Activated CD8-positive, alpha-beta T cell treated with anti-CD3 and anti-CD28 coated beads for 36 hours (primary cell): ENCODE measurements at regions of chr4 and their contacts with region 1.

Region 1: DNA sequence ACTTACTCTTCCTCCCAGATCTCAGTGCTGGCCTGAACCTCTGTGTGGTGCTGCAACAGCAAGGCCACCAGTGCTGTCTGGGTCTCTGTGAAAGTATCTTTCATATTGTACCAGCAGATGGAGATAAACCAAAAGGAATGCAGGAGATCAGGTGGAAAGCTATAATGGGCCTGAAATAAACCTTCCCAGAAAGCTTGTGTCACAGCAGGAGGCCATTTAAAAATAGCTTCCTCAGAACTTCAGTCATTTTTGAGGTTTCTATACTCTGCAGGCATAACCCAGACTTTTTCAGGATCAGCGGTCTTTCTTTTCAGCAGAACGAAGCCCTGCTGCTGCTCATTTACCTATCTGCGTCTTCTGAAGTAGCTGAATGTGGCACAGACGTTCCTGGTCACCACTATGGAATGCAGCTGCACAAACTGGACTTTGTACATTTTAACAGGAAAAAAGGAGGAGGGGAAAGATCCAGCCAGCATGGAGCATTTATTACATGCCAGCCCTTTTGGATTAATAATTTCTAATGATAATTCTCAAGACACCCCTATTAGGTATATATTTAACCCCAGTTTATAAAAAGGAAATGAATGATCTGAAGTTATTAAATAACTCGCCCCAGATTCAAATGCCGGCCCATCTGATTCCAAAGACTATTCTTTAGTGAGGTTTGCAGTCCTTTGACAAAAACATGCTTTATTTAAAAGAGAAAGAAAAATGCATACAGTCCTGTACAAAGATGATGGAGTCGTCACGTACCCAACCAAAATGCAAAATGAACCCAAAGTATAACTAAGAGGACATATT is 119.7 kb downstream of the NFKB1 start:
- DNase-seq: peak; percentile 31
- ATAC-seq: peak; percentile 23
- H3K4me3 Mint-ChIP-seq: no peak overlapping the region
- H3K27ac Mint-ChIP-seq: no peak overlapping the region
- H3K4me1 Mint-ChIP-seq: peaks cover 46% of the 10 kb centered on the region
- H3K27me3 Mint-ChIP-seq: no peaks in the 10 kb centered on the region
- CTCF ChIP-seq: no peak

Region 2: GRCh38 chr4:102344954-102345794 is 275.7 kb before region 1 on chr4 and contains the start of gene SLC39A8:
- CTCF ChIA-PET with region 1: interaction called, 4 read pairs
- POLR2A ChIA-PET with region 1: no interaction called
- intact Hi-C with region 1: loop called (anchors 10 kb)
- DNase-seq: peak; percentile 96
- ATAC-seq: peak; percentile 83
- H3K4me3 Mint-ChIP-seq: peak within 1 kb of the TSS; percentile 81
- H3K27ac Mint-ChIP-seq: peak within 1 kb of the TSS; percentile 97
- H3K4me1 Mint-ChIP-seq: peaks cover 42% of the 10 kb centered on the region
- H3K27me3 Mint-ChIP-seq: no peaks in the 10 kb centered on the region
- CTCF ChIP-seq: peak; percentile 97
- total RNA-seq, gene SLC39A8: 60.2 to 61.6 TPM

Region 3: GRCh38 chr4:102430461-102430910 is 190.4 kb before region 1 on chr4:
- CTCF ChIA-PET with region 1: interaction called, 3 read pairs
- POLR2A ChIA-PET with region 1: no interaction called
- intact Hi-C with region 1: loop called (anchors 5 kb)
- DNase-seq: no peak
- ATAC-seq: no peak
- H3K4me3 Mint-ChIP-seq: peak overlapping the region; percentile 84
- H3K27ac Mint-ChIP-seq: peak overlapping the region; percentile 88
- H3K4me1 Mint-ChIP-seq: peaks cover 11% of the 10 kb centered on the region
- H3K27me3 Mint-ChIP-seq: no peaks in the 10 kb centered on the region
- CTCF ChIP-seq: no peak

Region 4: DNA sequence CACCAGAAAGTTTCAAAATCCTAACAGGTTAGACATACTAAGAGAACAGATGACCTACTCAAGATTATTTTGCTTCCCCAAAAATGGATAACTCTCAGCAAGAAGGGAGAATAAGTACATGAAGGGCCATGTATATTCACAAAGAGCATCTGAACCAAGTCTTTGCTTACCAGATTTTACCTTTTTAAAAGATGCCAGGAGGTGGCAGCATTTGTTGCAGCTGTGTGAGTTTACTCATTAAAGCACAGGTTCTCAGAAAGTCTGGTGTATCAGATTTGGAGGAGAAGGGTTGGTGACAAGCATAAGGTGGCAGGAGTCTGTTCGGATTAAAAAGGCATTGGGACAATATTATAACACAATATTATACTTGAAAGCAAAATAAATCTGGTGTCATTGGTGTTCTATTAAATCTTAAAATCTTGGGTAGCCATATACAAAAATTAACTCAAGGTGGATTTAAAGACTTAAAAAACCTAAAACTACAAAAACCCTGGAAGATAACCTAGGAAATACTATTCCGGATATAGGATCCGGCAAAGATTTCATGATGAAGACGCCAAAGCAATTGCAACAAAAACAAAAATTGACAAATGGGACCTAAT is 171.0 kb before region 1 on chr4:
- CTCF ChIA-PET with region 1: interaction called, 24 read pairs
- POLR2A ChIA-PET with region 1: interaction called, 8 read pairs
- intact Hi-C with region 1: loop called (anchors 1 kb)
- DNase-seq: peak; percentile 73
- ATAC-seq: peak; percentile 77
- H3K4me3 Mint-ChIP-seq: no peak overlapping the region
- H3K27ac Mint-ChIP-seq: no peak overlapping the region
- H3K4me1 Mint-ChIP-seq: peaks cover 48% of the 10 kb centered on the region
- H3K27me3 Mint-ChIP-seq: no peaks in the 10 kb centered on the region
- CTCF ChIP-seq: peak; percentile 88

Region 5: DNA sequence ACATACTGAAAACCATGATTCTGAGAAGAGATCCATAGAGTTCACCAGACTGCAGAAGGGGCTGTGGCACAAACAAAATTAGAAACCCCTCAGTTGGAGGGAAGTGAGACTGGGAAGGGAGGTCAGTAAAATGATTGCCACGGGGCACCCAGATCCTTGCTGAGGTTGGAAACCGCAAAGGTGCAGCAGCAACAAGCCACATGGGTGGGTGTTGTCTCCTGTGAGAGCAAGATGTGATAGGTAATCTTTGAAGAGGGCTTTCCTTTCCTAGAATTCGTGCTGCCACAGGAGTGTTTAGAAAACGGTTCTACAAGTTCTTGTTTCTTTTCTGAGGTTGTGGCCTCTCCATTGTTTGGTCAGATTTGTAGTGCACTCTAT is 34.3 kb before region 1 on chr4:
- CTCF ChIA-PET with region 1: no interaction called
- POLR2A ChIA-PET with region 1: no interaction called
- intact Hi-C with region 1: loop called (anchors 5 kb)
- DNase-seq: peak; percentile 83
- ATAC-seq: peak; percentile 62
- H3K4me3 Mint-ChIP-seq: no peak overlapping the region
- H3K27ac Mint-ChIP-seq: peak overlapping the region; percentile 95
- H3K4me1 Mint-ChIP-seq: peaks cover 87% of the 10 kb centered on the region
- H3K27me3 Mint-ChIP-seq: no peaks in the 10 kb centered on the region
- CTCF ChIP-seq: no peak

Region 6: DNA sequence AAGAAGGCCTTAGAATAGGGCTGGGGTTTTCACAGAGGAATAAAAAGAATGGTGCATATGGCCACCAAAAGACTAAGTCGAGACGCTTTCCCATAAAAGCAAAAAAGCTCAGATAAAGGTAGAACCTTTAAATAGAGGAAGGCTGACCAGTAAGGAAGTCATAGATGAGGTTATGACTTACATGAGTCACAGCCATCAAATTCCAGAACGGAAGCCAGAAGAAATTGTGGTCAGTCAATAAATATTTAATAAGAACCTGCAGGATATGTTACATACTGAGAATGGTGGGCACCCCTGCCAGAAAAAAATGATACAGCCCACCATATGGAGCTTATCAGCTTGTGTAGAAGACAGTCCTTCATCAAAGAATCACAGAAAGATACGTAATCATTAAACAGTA is 19.8 kb after region 1 on chr4:
- CTCF ChIA-PET with region 1: no interaction called
- POLR2A ChIA-PET with region 1: no interaction called
- intact Hi-C with region 1: no loop called
- DNase-seq: no peak
- ATAC-seq: no peak
- H3K4me3 Mint-ChIP-seq: no peak overlapping the region
- H3K27ac Mint-ChIP-seq: no peak overlapping the region
- H3K4me1 Mint-ChIP-seq: peaks cover 11% of the 10 kb centered on the region
- H3K27me3 Mint-ChIP-seq: no peaks in the 10 kb centered on the region
- CTCF ChIP-seq: no peak

Region 7: DNA sequence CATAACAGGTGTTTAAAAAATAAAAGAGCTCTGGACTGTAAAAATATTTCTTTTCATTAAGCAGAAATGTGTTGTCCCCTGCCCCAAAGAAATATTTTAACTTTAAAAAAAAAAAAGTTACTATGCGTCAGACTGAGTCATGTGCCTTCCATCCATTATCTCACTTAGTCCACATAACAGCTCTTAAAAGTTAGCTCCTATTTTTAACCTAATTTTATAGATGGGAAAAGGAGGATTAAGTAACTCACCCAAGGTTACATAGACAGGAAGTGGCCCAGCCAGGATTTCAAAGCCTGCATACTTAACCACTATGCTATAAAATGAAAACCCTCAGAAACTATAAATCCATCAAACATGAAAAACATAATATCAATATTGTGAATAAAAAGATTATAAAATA is 42.2 kb after region 1 on chr4:
- CTCF ChIA-PET with region 1: no interaction called
- POLR2A ChIA-PET with region 1: no interaction called
- intact Hi-C with region 1: no loop called
- DNase-seq: no peak
- ATAC-seq: no peak
- H3K4me3 Mint-ChIP-seq: no peak overlapping the region
- H3K27ac Mint-ChIP-seq: no peak overlapping the region
- H3K4me1 Mint-ChIP-seq: no peaks in the 10 kb centered on the region
- H3K27me3 Mint-ChIP-seq: no peaks in the 10 kb centered on the region
- CTCF ChIP-seq: no peak

Region 8: GRCh38 chr4:102789317-102789717 is 168.4 kb after region 1 on chr4:
- CTCF ChIA-PET with region 1: no interaction called
- POLR2A ChIA-PET with region 1: no interaction called
- intact Hi-C with region 1: no loop called
- DNase-seq: no peak
- ATAC-seq: peak; percentile 28
- H3K4me3 Mint-ChIP-seq: no peak overlapping the region
- H3K27ac Mint-ChIP-seq: no peak overlapping the region
- H3K4me1 Mint-ChIP-seq: peaks cover 25% of the 10 kb centered on the region
- H3K27me3 Mint-ChIP-seq: no peaks in the 10 kb centered on the region
- CTCF ChIP-seq: no peak

Region 9: GRCh38 chr4:103008875-103009729 is 388.2 kb after region 1 on chr4:
- CTCF ChIA-PET with region 1: interaction called, 7 read pairs
- POLR2A ChIA-PET with region 1: no interaction called
- intact Hi-C with region 1: loop called (anchors 5 kb)
- DNase-seq: no peak
- ATAC-seq: peak; percentile 93
- H3K4me3 Mint-ChIP-seq: no peak overlapping the region
- H3K27ac Mint-ChIP-seq: no peak overlapping the region
- H3K4me1 Mint-ChIP-seq: no peaks in the 10 kb centered on the region
- H3K27me3 Mint-ChIP-seq: no peaks in the 10 kb centered on the region
- CTCF ChIP-seq: peak; percentile 83

Region 10: DNA sequence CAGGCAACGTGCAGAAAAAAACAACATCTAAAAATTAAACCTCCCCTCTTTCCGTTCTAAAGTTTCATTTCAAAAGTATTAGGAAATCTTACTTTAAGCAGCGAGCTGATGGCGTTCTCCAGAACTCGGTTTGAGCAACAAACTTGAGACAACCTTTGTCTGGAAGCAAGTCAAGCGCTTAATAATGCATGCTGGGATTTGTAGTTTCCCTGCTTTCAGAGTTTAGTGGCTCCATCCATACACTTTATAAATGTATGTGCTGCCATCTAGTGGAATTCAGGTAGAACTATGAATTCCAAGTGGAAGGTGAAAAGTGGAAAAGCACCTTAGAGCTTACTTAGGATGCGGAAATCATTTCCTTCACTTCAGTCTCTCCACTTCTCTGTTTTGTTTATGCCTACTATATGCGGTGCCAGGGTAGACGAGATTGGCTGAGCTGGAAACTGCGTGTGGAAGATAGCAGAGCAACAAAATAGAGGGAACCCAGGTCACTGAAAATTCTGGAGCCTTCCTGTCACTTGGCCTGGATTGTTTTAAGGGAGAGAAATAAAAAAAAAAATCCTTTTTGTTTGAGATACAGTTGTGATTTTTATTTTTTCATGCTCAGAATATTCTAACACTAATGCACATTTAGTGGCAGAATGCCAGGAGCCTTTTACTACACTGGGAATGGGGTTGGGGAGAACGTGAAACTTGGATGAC is 478.9 kb after region 1 on chr4 and contains the start of gene BDH2:
- CTCF ChIA-PET with region 1: interaction called, 5 read pairs
- POLR2A ChIA-PET with region 1: no interaction called
- intact Hi-C with region 1: loop called (anchors 5 kb)
- DNase-seq: peak; percentile 49
- ATAC-seq: peak; percentile 97
- H3K4me3 Mint-ChIP-seq: peak within 1 kb of the TSS; percentile 90
- H3K27ac Mint-ChIP-seq: peak within 1 kb of the TSS; percentile 90
- H3K4me1 Mint-ChIP-seq: peaks cover 23% of the 10 kb centered on the region
- H3K27me3 Mint-ChIP-seq: no peaks in the 10 kb centered on the region
- CTCF ChIP-seq: peak; percentile 77
- total RNA-seq, gene BDH2: 17.0 to 19.4 TPM